Caco-2 (cell line): ENCODE measurements at regions of chr11 and their contacts with region 1.

Region 1: GRCh38 chr11:38131535-38131934 is 1533.5 kb upstream of the RAG2 start:
- DNase-seq: no peak
- H3K4me3 ChIP-seq: no peak overlapping the region
- H3K4me3 Mint-ChIP-seq: no peak overlapping the region
- H3K27ac Mint-ChIP-seq: no peak overlapping the region
- H3K4me1 ChIP-seq: no peaks in the 10 kb centered on the region
- H3K4me1 Mint-ChIP-seq: no peaks in the 10 kb centered on the region
- H3K27me3 ChIP-seq: no peaks in the 10 kb centered on the region
- H3K27me3 Mint-ChIP-seq: no peaks in the 10 kb centered on the region
- CTCF ChIP-seq: no peak

Region 2: DNA sequence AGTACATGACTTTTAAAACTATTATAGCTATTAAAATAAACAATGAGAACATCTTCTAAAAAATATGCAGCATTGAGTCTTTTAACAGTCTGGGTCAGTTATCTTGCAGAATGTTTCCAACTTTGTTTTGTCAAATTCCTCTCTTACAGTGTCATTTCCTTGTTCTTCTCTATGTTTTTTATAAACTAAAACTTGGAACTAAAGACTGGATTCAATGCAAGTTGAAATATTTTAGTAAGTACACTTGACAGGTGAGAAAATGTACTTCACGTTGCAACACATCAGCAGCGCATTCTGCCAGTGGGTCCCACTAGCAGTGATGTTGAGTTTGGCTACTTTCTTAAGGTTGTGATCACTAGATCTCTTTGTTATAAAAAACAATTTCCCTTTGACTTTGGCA is 125.9 kb before region 1 on chr11:
- CTCF ChIA-PET with region 1: no interaction called
- POLR2A ChIA-PET with region 1: no interaction called
- intact Hi-C with region 1: no loop called
- DNase-seq: no peak
- H3K4me3 ChIP-seq: no peak overlapping the region
- H3K4me3 Mint-ChIP-seq: no peak overlapping the region
- H3K27ac Mint-ChIP-seq: no peak overlapping the region
- H3K4me1 ChIP-seq: no peaks in the 10 kb centered on the region
- H3K4me1 Mint-ChIP-seq: no peaks in the 10 kb centered on the region
- H3K27me3 ChIP-seq: no peaks in the 10 kb centered on the region
- H3K27me3 Mint-ChIP-seq: no peaks in the 10 kb centered on the region
- CTCF ChIP-seq: no peak

Region 3: DNA sequence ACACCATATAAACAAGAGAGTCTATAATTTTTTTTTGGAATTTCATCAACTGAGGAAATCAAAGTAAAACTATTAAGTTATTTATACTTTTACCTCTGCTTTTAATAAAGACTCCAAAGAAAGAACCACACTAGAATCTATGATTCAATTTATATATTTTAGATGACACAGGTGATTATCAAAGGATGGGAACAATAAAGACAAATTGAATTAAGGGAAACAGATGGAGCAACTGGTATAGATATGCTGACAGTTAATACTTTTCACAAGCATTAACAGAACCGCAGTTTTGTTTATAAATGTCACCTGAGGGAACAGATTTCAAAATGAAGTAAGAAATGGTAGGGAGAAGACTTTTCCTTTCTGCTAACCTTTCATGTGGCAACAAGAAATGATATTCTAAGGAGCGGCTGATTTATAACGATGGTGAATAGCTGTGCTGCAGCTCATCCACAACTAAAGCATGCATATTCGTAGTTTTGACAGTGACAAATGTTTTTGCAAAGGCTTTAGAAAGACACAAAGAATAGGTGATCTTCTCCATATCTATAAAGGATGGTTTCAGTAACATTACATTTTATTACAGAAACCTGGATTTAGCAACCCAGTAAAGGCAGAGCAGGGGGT is 30.6 kb before region 1 on chr11:
- CTCF ChIA-PET with region 1: no interaction called
- POLR2A ChIA-PET with region 1: no interaction called
- intact Hi-C with region 1: loop called (anchors 2 kb)
- DNase-seq: no peak
- H3K4me3 ChIP-seq: no peak overlapping the region
- H3K4me3 Mint-ChIP-seq: no peak overlapping the region
- H3K27ac Mint-ChIP-seq: no peak overlapping the region
- H3K4me1 ChIP-seq: no peaks in the 10 kb centered on the region
- H3K4me1 Mint-ChIP-seq: no peaks in the 10 kb centered on the region
- H3K27me3 ChIP-seq: no peaks in the 10 kb centered on the region
- H3K27me3 Mint-ChIP-seq: no peaks in the 10 kb centered on the region
- CTCF ChIP-seq: no peak

Region 4: GRCh38 chr11:38169012-38169684 is 37.6 kb after region 1 on chr11:
- CTCF ChIA-PET with region 1: no interaction called
- POLR2A ChIA-PET with region 1: no interaction called
- intact Hi-C with region 1: loop called (anchors 1 kb)
- DNase-seq: no peak
- H3K4me3 ChIP-seq: no peak overlapping the region
- H3K4me3 Mint-ChIP-seq: peak overlapping the region; percentile 10
- H3K27ac Mint-ChIP-seq: peak overlapping the region; percentile 49
- H3K4me1 ChIP-seq: peaks cover 15% of the 10 kb centered on the region
- H3K4me1 Mint-ChIP-seq: peaks cover 12% of the 10 kb centered on the region
- H3K27me3 ChIP-seq: no peaks in the 10 kb centered on the region
- H3K27me3 Mint-ChIP-seq: no peaks in the 10 kb centered on the region
- CTCF ChIP-seq: no peak

Region 5: GRCh38 chr11:38182126-38182866 is 50.8 kb after region 1 on chr11:
- CTCF ChIA-PET with region 1: no interaction called
- POLR2A ChIA-PET with region 1: no interaction called
- intact Hi-C with region 1: loop called (anchors 1 kb)
- DNase-seq: no peak
- H3K4me3 ChIP-seq: no peak overlapping the region
- H3K4me3 Mint-ChIP-seq: no peak overlapping the region
- H3K27ac Mint-ChIP-seq: no peak overlapping the region
- H3K4me1 ChIP-seq: peaks cover 8% of the 10 kb centered on the region; the same call in 1 of the 2 replicates
- H3K4me1 Mint-ChIP-seq: no peaks in the 10 kb centered on the region
- H3K27me3 ChIP-seq: no peaks in the 10 kb centered on the region
- H3K27me3 Mint-ChIP-seq: no peaks in the 10 kb centered on the region
- CTCF ChIP-seq: no peak

Region 6: GRCh38 chr11:38208951-38209350 is 77.4 kb after region 1 on chr11:
- CTCF ChIA-PET with region 1: no interaction called
- POLR2A ChIA-PET with region 1: no interaction called
- intact Hi-C with region 1: no loop called
- DNase-seq: no peak
- H3K4me3 ChIP-seq: no peak overlapping the region
- H3K4me3 Mint-ChIP-seq: no peak overlapping the region
- H3K27ac Mint-ChIP-seq: no peak overlapping the region
- H3K4me1 ChIP-seq: no peaks in the 10 kb centered on the region
- H3K4me1 Mint-ChIP-seq: no peaks in the 10 kb centered on the region
- H3K27me3 ChIP-seq: no peaks in the 10 kb centered on the region
- H3K27me3 Mint-ChIP-seq: no peaks in the 10 kb centered on the region
- CTCF ChIP-seq: no peak